IMR-90 (cell line): ENCODE measurements at regions of chr1 and their contacts with region 1.

Region 1: GRCh38 chr1:167489571-167490340 is 28.6 kb downstream of the CD247 start:
- DNase-seq: no peak
- ATAC-seq: no peak
- H3K4me3 ChIP-seq: no peak overlapping the region
- H3K27ac ChIP-seq: no peak overlapping the region
- H3K4me1 ChIP-seq: no peaks in the 10 kb centered on the region
- H3K27me3 ChIP-seq: peaks cover 17% of the 10 kb centered on the region
- CTCF ChIP-seq: no peak
- POLR2A ChIP-seq: no peak
- RAD21 ChIP-seq: no peak

Region 2: DNA sequence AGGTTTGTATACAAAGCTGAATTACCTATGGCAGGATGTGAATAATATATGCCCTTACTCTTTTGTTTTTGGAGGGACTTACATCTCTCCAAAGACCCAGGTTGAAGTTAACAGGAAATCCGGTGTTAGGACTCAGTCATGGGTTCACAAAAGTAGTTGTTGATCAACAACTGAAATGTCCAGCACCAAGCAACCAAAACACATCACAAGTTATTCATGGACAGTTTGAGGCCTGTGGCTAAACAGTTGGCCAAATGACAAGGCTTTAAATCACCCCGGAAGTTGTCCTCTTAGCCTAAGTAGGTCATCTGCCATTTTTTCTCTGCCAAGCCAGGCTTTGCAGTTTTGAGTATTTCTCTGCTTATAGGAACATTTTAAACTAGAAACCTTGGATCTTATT is 61.4 kb before region 1 on chr1:
- CTCF ChIA-PET with region 1: no interaction called
- POLR2A ChIA-PET with region 1: no interaction called
- dilution Hi-C with region 1: no loop called
- in situ Hi-C with region 1: loop called (anchors 10 kb)
- intact Hi-C with region 1: no loop called
- DNase-seq: no peak
- ATAC-seq: no peak
- H3K4me3 ChIP-seq: no peak overlapping the region
- H3K27ac ChIP-seq: no peak overlapping the region
- H3K4me1 ChIP-seq: no peaks in the 10 kb centered on the region; the same call in 1 of the 2 replicates
- H3K27me3 ChIP-seq: no peaks in the 10 kb centered on the region; the same call in 1 of the 2 replicates
- CTCF ChIP-seq: no peak
- POLR2A ChIP-seq: no peak
- RAD21 ChIP-seq: no peak